SK-N-SH (cell line): ENCODE measurements at regions of chr2 and their contacts with region 1.

Region 1: DNA sequence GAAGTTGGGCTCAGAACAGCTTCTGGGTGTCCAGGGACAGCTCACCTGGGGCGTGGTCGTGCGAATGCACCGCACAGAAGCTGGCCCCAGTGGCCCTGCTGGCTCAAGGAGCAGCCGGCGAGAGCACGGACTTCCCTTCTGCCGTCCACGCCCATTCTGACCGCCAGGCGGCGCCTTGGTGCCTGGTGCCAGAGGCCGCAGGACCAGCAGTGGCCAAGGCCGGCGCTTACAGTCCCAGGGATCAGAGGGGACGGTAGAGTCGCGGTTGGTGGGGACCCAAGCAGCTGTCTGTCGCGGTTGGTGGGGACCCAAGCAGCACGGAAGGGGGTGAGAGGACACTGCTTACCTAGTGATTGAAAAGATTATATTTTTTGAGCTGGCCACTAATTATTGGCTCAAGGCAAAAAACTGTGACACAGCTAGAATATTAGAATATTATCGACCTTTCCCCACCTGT is 25.7 kb downstream of the NPPC start:
- DNase-seq: peak; percentile 79
- H3K4me3 ChIP-seq: peak overlapping the region in 1 of 2 experiments; percentile 52; a peak in 1 of 4 replicates
- H3K27ac ChIP-seq: no peak overlapping the region
- H3K4me1 ChIP-seq: no peaks in the 10 kb centered on the region
- H3K27me3 ChIP-seq: no peaks in the 10 kb centered on the region; the same call in 1 of the 2 replicates
- CTCF ChIP-seq: peak; percentile 74
- EP300 ChIP-seq: no peak
- RAD21 ChIP-seq: peak; percentile 50

Region 2: DNA sequence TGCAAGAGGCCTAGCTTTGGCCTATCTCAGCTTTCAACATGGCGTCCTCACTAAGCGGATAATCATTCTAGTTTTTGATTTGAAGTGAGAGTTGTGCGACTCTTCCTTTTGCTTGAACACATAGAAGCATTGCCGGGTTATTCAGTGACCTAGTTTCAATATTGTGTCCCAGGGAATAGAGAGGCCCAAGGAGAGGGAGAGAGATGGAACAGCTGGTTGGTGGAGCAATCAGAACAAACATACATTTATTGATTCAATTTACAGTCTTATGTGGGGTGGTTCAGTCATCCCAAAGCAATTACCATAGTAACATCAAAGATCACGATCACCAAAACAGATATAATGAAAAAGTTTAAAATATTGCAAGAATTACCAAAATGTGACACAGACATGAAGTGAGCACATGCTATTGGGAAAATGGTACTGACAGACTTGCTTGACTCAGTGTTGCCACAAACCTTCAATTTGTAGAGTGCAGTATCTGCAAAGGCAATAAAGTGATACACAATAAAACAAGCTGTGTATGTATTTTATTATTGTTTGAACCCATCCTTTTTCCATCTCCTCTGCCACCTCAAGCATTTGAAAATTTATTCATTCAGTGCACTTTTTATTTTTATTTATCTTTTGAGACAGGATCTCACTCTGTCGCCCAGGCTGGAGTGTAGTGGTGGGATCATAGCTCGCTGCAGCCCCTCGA is 84.0 kb before region 1 on chr2:
- CTCF ChIA-PET with region 1: no interaction called
- POLR2A ChIA-PET with region 1: no interaction called
- DNase-seq: no peak
- H3K4me3 ChIP-seq: no peak overlapping the region
- H3K27ac ChIP-seq: no peak overlapping the region
- H3K4me1 ChIP-seq: no peaks in the 10 kb centered on the region
- H3K27me3 ChIP-seq: no peaks in the 10 kb centered on the region; the same call in 1 of the 2 replicates
- CTCF ChIP-seq: no peak
- EP300 ChIP-seq: no peak
- RAD21 ChIP-seq: no peak

Region 3: DNA sequence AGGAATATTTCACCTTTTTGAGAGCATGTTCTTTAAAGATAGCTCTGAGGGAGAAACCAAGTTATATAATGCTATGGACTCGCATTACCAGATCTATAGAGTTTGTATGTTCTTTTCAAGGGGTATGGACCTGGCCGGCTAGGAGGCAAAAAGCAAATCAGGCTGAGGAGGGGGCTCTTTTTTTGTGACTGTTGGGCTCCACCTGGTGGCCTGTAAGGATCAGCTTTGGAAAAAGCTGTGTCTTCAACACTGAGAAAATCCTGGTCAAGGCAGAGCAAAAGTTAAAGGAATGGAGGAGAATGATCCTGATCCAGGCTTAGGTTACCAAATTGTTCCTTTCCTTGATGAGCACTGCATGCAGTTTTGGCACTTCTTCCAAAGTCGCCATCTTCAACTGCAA is 241.5 kb after region 1 on chr2:
- CTCF ChIA-PET with region 1: interaction called, 17 read pairs
- POLR2A ChIA-PET with region 1: no interaction called
- DNase-seq: peak; percentile 48
- H3K4me3 ChIP-seq: no peak overlapping the region; a peak in 1 of 4 replicates
- H3K27ac ChIP-seq: no peak overlapping the region
- H3K4me1 ChIP-seq: peaks cover 0 to 13% of the 10 kb centered on the region in 2 experiments; a peak in 1 of 4 replicates
- H3K27me3 ChIP-seq: no peaks in the 10 kb centered on the region
- CTCF ChIP-seq: peak; percentile 79
- EP300 ChIP-seq: no peak
- RAD21 ChIP-seq: peak; percentile 80

Region 4: GRCh38 chr2:232327105-232328041 is 426.9 kb after region 1 on chr2:
- CTCF ChIA-PET with region 1: interaction called, 39 read pairs
- POLR2A ChIA-PET with region 1: no interaction called
- DNase-seq: peak; percentile 85
- H3K4me3 ChIP-seq: no peak overlapping the region
- H3K27ac ChIP-seq: no peak overlapping the region; a peak in 1 of 4 replicates
- H3K4me1 ChIP-seq: peaks cover 0 to 6% of the 10 kb centered on the region in 2 experiments; a peak in 1 of 4 replicates
- H3K27me3 ChIP-seq: no peaks in the 10 kb centered on the region
- CTCF ChIP-seq: peak; percentile 90
- EP300 ChIP-seq: no peak
- RAD21 ChIP-seq: peak; percentile 68

Region 5: GRCh38 chr2:232432598-232433184 is 532.2 kb after region 1 on chr2:
- CTCF ChIA-PET with region 1: interaction called, 11 read pairs
- POLR2A ChIA-PET with region 1: no interaction called
- DNase-seq: peak; percentile 15
- H3K4me3 ChIP-seq: no peak overlapping the region
- H3K27ac ChIP-seq: no peak overlapping the region
- H3K4me1 ChIP-seq: no peaks in the 10 kb centered on the region
- H3K27me3 ChIP-seq: peaks cover 2% of the 10 kb centered on the region; the same call in 1 of the 2 replicates
- CTCF ChIP-seq: no peak; the same call in 1 of the 2 replicates
- EP300 ChIP-seq: no peak
- RAD21 ChIP-seq: no peak

Region 6: GRCh38 chr2:232438951-232439757 is 538.6 kb after region 1 on chr2:
- CTCF ChIA-PET with region 1: interaction called, 49 read pairs
- POLR2A ChIA-PET with region 1: no interaction called
- DNase-seq: peak; percentile 70
- H3K4me3 ChIP-seq: no peak overlapping the region
- H3K27ac ChIP-seq: no peak overlapping the region
- H3K4me1 ChIP-seq: no peaks in the 10 kb centered on the region; a peak in 1 of 4 replicates
- H3K27me3 ChIP-seq: no peaks in the 10 kb centered on the region
- CTCF ChIP-seq: peak; percentile 67
- EP300 ChIP-seq: no peak
- RAD21 ChIP-seq: peak; percentile 29